Motor neuron (in vitro differentiated cells): ENCODE measurements at regions of chr3 and their contacts with region 1.

Region 1: GRCh38 chr3:172476347-172476746 is 28.1 kb upstream of the GHSR start:
- ATAC-seq: no peak
- H3K4me3 ChIP-seq: no peak overlapping the region
- H3K27ac ChIP-seq: no peak overlapping the region
- H3K4me1 ChIP-seq: no peaks in the 10 kb centered on the region

Region 2: DNA sequence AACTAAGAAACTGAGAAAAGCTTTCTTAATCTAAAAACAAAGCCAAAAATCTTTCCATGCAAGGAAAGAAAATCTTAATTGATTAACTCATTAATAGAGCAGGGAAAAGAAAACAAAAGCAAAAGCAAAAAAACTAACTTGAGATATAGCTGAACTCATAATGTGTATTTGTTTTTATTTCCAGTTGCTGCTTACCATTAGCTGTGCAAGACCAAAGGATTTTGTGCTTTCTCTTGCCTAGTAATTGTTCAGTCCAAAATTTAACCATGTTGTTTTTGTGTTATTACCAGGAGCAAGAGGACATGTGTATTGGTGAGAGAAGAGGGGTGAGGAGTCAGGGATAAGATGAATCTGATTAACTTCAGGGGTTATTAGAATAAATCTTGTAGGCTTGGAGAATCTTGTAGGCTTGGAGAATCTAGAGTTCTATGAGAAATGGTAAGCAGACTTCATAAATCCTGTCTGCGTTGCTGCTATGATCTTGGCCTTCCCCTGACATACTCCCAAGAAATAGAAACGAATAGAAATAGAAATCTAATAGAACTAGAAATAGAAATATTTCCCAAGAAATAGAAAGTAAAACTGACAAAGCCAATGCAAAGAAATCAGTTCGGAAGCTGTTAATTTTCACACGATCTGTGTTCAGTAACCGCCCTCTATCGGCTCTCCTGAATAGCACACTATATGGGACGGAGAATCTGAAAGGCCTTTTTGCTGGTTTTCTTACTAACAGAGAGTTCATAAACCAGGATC is 119.5 kb after region 1 on chr3:
- in situ Hi-C with region 1: loop called in 2 of 9 experiments (anchors 10 to 25 kb)
- ATAC-seq: peak in 5 of 8 experiments; percentile 28 to 89 (median 76)
- H3K4me3 ChIP-seq: no peak overlapping the region
- H3K27ac ChIP-seq: no peak overlapping the region
- H3K4me1 ChIP-seq: no peaks in the 10 kb centered on the region

Region 3: DNA sequence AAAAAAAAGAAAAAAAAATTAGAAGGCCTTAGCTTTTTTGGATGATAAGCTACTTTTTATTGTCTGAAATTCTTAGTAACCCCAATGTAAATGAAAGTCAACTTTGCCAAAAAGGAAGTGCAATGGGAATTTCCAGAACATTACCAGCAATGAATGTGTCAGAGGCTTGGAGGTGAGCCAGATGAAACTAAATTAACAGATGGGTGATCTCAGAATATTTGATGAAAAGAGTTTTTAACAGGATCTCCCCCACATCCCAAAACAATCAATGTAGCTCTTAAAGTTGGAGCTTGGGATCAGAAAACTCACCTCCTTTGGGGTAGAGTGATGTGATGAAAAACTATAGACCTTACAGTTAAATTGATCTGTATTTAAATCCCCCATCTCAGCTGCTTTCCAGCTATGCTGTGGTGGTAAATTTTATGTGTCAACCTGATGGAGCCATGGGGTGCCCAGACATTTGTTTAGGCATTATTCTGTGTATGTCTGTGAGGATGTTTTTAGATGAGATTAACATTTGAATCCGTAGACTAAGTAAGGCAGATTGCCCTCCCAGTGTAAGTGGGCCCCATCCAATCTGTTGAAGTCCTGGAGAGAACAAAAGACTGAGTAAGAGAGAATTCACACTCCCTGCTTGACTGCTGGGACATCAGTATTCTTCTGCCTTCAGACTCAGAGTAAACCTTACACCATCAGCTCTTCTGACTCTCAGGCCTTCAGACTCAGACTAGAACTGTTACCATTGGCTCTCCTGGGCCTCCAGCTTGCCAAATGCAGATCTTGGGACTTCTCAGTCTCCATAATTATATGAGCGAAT is 131.2 kb after region 1 on chr3:
- in situ Hi-C with region 1: loop called in 1 of 9 experiments (anchors 10 kb)
- ATAC-seq: peak; percentile 28 to 95 (median 65)
- H3K4me3 ChIP-seq: no peak overlapping the region
- H3K27ac ChIP-seq: no peak overlapping the region
- H3K4me1 ChIP-seq: peaks cover 6% of the 10 kb centered on the region in 2 donors

Region 4: DNA sequence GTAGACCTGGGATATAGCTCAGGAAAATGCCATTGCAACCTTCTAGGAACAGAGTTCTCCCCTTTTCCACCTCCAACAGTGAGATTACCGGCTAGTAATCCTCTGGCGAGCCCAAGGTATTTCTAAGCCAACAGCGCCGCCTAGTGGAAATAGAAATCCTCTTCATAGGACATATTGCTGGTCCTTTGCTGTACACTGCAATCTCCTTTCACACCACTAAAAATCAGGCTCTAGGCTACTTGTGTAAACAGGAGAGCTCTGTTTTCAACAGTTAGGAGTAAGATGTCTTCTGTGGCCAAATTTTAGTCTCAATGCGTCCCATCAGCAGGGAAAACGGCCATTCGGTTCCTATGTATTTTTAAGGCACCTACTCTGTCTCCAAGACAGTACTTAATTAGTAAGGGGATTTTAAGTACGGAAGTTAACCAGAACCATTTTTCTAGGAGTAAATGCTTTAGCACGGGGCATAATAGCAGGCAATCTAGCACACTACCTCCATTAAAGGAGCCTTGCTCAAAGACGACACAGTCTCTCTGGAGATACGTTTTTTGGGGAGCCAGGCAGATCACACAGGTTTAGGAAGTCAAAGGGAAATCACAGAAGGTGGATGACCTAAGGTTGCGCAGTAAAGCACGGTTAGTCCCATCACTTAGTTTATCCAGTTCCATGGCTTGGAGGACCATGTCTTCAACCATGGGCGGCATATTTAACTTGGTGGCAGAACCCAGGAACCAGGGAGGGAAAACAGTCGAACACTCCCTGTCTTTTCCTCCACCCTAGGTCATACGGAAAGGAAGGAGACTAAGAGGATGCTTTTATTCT is 190.7 kb after region 1 on chr3:
- in situ Hi-C with region 1: loop called in 1 of 9 experiments (anchors 25 kb)
- ATAC-seq: peak; percentile 80 to 100 (median 96)
- H3K4me3 ChIP-seq: no peak overlapping the region
- H3K27ac ChIP-seq: no peak overlapping the region
- H3K4me1 ChIP-seq: no peaks in the 10 kb centered on the region